Ascending aorta (tissue), 2 donors: ENCODE measurements at regions of chr1 and their contacts with region 1.

Region 1: DNA sequence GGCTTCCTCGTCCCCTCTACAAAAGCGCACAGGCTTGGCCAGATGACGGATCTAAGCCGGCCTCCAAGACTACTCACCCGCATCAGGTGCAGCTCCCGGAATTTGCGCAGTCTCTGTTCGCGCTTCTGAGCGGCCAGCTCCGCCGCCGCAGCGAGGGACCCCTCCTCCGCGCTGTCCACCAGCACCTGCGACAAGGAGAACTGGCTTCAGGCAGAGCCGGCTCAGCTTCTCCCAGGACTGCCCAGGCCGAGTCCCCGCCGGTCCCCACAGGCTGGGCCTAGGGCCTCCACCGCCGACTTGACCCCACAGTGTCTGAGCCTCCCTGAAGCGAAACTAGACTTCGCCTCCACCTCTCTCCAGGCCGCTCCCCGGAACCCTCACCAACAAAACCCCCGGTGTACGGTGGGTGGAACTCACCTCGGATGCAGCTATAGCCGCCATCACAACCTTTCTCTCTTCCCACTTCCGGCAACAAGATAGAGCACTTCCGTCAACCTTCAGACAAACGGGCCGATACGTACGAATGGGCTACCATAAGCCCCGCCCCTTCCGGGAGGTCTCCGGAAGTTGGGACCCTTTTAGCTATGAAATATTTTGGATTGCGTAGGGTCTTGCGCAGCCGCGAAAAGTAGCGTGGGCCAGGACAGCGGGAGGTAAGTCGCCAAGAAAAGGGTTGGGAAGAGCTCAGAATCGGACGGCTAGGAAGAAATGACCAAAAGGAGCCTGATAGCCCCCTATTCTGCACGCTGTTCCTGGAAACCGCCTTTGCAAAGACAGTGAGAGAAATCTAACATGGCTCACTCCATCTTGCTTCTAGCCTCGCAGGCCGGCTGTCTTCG is at the start of gene SYF2:
- DNase-seq: peak; percentile 75 to 96
- H3K4me3 ChIP-seq: peak within 1 kb of the TSS; percentile 92 to 98
- H3K27ac ChIP-seq: peak within 1 kb of the TSS; percentile 81 to 93
- H3K4me1 ChIP-seq: peaks cover 10 to 18% of the 10 kb centered on the region in 2 donors
- H3K27me3 ChIP-seq: no peaks in the 10 kb centered on the region
- CTCF ChIP-seq: no peak
- total RNA-seq, gene SYF2: 14.3 TPM

Region 2: DNA sequence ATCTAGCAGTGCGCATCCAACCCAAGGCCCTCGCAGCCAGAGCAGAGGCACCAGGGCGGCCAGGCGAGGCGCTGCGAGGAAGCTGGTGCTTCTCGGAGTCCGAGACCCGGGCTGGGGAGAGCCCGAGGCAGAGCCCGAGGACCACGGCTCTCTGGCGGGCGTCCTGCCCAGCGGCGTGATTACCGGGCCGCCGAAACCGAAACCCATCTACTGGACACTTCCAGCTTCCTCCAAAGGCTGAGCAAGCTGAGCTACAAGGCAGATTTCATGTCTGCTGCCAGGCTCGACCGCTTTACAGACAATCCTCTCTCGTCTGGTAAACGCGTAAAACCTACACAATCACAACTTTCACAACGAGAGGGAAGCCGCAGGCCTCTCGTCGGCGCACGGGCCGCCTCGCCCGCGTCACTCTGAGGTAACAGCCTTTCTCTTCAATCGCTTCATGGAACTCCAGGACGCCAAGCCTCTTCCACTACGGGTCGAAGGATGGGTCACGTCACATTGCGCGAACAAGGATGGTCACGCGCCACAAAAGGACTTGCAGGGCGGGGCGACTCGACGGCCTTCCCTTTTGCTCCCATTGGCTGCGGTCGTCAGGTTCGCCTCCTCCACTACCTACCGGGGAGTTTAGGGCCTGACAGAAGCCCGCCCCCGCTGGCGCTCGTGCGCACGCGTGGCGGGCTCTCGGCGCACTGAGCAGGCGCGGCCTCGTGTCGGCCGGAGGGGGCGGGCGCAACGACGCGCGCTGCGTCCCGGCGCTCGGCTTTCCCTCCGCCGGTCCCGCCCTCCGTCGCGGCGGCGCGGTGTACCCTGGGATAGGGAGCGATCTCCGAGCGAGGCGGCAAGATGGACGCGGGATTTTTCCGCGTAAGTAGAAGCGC is 589.5 kb before region 1 on chr1 and contains the start of gene SRRM1:
- intact Hi-C with region 1: loop called (anchors 5 kb)
- DNase-seq: peak; percentile 98 to 100
- H3K4me3 ChIP-seq: peak within 1 kb of the TSS; percentile 73 to 88
- H3K27ac ChIP-seq: peak within 1 kb of the TSS; percentile 95 to 100
- H3K4me1 ChIP-seq: peaks cover 8 to 15% of the 10 kb centered on the region in 2 donors
- H3K27me3 ChIP-seq: no peaks in the 10 kb centered on the region
- CTCF ChIP-seq: peak in 2 of 3 experiments; percentile 10
- total RNA-seq, gene SRRM1: 90.5 TPM

Region 3: GRCh38 chr1:25338188-25338981 is 106.1 kb after region 1 on chr1 and contains the start of gene TMEM50A:
- intact Hi-C with region 1: loop called (anchors 2 kb)
- DNase-seq: peak; percentile 70 to 94
- H3K4me3 ChIP-seq: peak within 1 kb of the TSS; percentile 85 to 98
- H3K27ac ChIP-seq: peak within 1 kb of the TSS; percentile 98 to 100
- H3K4me1 ChIP-seq: peaks cover 7 to 15% of the 10 kb centered on the region in 2 donors
- H3K27me3 ChIP-seq: no peaks in the 10 kb centered on the region
- CTCF ChIP-seq: no peak
- total RNA-seq, gene TMEM50A: 143 TPM